Calu3 (cell line): ENCODE measurements at regions of chr14 and their contacts with region 1.

Region 1: GRCh38 chr14:92880869-92881289 is 42.1 kb upstream of the CHGA start:
- DNase-seq: peak; percentile 64
- H3K4me3 Mint-ChIP-seq: no peak overlapping the region
- H3K27ac Mint-ChIP-seq: no peak overlapping the region
- H3K4me1 Mint-ChIP-seq: no peaks in the 10 kb centered on the region
- H3K27me3 Mint-ChIP-seq: peaks cover 66% of the 10 kb centered on the region
- CTCF ChIP-seq: peak; percentile 41

Region 2: GRCh38 chr14:92945959-92946846 is 65.3 kb after region 1 on chr14:
- CTCF ChIA-PET with region 1: interaction called, 7 read pairs
- intact Hi-C with region 1: loop called (anchors 5 kb)
- DNase-seq: peak; percentile 92
- H3K4me3 Mint-ChIP-seq: peak overlapping the region; percentile 2
- H3K27ac Mint-ChIP-seq: peak overlapping the region; percentile 86
- H3K4me1 Mint-ChIP-seq: peaks cover 16% of the 10 kb centered on the region
- H3K27me3 Mint-ChIP-seq: no peaks in the 10 kb centered on the region
- CTCF ChIP-seq: no peak

Region 3: GRCh38 chr14:93150227-93151206 is 269.6 kb after region 1 on chr14:
- CTCF ChIA-PET with region 1: no interaction called
- intact Hi-C with region 1: loop called (anchors 5 kb)
- DNase-seq: peak; percentile 68
- H3K4me3 Mint-ChIP-seq: no peak overlapping the region
- H3K27ac Mint-ChIP-seq: no peak overlapping the region
- H3K4me1 Mint-ChIP-seq: peaks cover 16% of the 10 kb centered on the region
- H3K27me3 Mint-ChIP-seq: no peaks in the 10 kb centered on the region
- CTCF ChIP-seq: no peak

Region 4: GRCh38 chr14:93219103-93219726 is 338.3 kb after region 1 on chr14:
- CTCF ChIA-PET with region 1: interaction called, 10 read pairs
- intact Hi-C with region 1: no loop called
- DNase-seq: peak; percentile 50
- H3K4me3 Mint-ChIP-seq: no peak overlapping the region
- H3K27ac Mint-ChIP-seq: no peak overlapping the region
- H3K4me1 Mint-ChIP-seq: no peaks in the 10 kb centered on the region
- H3K27me3 Mint-ChIP-seq: no peaks in the 10 kb centered on the region
- CTCF ChIP-seq: peak; percentile 32

Region 5: DNA sequence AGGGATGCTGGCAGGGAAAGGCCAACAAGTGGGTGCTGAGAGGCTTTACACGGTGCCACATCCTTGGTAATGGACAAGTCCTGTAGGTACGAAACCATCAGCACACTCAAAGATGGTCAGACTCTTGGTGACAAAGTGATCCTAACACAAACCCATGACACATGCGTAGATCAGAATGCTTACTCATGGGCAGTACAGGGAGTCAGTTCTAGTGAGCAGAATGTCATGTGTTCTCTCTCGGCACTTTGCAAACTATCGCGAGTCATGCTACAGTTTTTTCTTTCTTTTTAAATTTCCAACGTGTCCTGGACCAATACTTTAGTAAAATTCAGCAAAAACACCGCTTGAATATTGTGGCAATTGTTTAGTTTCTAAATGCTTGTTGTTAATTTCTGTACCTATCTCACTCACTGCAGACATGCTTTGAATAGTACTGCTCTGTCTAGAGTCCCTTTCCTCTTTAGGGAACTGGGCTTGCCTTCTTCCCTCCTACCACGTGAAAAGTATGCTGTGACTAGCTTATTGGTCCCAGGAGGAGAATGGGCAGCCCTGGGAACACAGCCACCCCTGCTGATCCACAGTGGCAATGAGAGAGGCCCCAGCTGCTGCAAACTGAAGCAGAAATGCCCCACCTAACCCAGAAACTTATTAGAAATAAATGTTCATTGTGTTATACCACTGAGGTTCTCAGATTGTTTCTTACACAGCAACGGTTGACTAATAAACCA is 388.6 kb after region 1 on chr14:
- CTCF ChIA-PET with region 1: no interaction called
- intact Hi-C with region 1: no loop called
- DNase-seq: no peak
- H3K4me3 Mint-ChIP-seq: no peak overlapping the region
- H3K27ac Mint-ChIP-seq: no peak overlapping the region
- H3K4me1 Mint-ChIP-seq: peaks cover 14% of the 10 kb centered on the region
- H3K27me3 Mint-ChIP-seq: no peaks in the 10 kb centered on the region
- CTCF ChIP-seq: no peak